GM12878 (cell line): ENCODE measurements at regions of chr7 and their contacts with region 1.

Region 1: DNA sequence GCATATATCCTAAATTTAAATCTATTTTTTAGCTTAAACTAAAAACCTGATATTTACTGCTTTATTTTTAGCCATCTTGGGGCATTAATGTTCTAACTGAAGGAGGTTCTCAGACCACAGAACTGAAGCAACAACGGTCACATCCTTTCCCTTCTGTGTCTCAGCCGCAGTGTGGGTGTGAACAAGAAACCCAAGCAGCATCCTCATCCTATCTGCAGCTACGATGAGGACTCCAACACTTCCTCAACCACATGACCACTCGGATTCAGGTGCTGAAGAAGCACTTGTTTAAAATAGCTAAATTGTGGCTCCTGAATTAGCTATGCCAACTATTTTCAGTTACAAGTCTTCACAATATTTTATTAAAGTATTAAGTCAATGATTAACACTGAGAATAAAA is 5.3 kb downstream of the ESYT2 start:
- DNase-seq: peak; percentile 61
- ATAC-seq: peak; percentile 74
- H3K4me3 ChIP-seq: no peak overlapping the region
- H3K27ac ChIP-seq: peak overlapping the region; percentile 46
- H3K4me1 ChIP-seq: peaks cover 21% of the 10 kb centered on the region
- H3K27me3 ChIP-seq: no peaks in the 10 kb centered on the region
- CTCF ChIP-seq: no peak
- EP300 ChIP-seq: peak; percentile 36 to 54; a peak in 1 of 4 replicates
- POLR2A ChIP-seq: peak; percentile 57; the same call in 1 of the 2 replicates
- RAD21 ChIP-seq: no peak

Region 2: GRCh38 chr7:158704704-158705468 is 119.1 kb before region 1 on chr7 and contains the start of gene NCAPG2:
- CTCF ChIA-PET with region 1: no interaction called
- POLR2A ChIA-PET with region 1: interaction called, 3 read pairs
- RAD21 ChIA-PET with region 1: no interaction called
- SMC1A ChIA-PET with region 1: interaction called, 5 read pairs
- in situ Hi-C with region 1: loop called (anchors 5 kb)
- intact Hi-C with region 1: loop called (anchors 2 kb)
- DNase-seq: peak; percentile 88
- ATAC-seq: peak; percentile 98
- H3K4me3 ChIP-seq: peak within 1 kb of the TSS; percentile 97
- H3K27ac ChIP-seq: peak within 1 kb of the TSS; percentile 90
- H3K4me1 ChIP-seq: peaks cover 3% of the 10 kb centered on the region
- H3K27me3 ChIP-seq: no peaks in the 10 kb centered on the region
- CTCF ChIP-seq: peak in 1 of 3 experiments; percentile 18; a peak in 1 of 6 replicates
- EP300 ChIP-seq: no peak
- POLR2A ChIP-seq: peak; percentile 98
- RAD21 ChIP-seq: no peak
- polyA plus RNA-seq, gene NCAPG2: 11.2 to 27.9 TPM

Region 3: DNA sequence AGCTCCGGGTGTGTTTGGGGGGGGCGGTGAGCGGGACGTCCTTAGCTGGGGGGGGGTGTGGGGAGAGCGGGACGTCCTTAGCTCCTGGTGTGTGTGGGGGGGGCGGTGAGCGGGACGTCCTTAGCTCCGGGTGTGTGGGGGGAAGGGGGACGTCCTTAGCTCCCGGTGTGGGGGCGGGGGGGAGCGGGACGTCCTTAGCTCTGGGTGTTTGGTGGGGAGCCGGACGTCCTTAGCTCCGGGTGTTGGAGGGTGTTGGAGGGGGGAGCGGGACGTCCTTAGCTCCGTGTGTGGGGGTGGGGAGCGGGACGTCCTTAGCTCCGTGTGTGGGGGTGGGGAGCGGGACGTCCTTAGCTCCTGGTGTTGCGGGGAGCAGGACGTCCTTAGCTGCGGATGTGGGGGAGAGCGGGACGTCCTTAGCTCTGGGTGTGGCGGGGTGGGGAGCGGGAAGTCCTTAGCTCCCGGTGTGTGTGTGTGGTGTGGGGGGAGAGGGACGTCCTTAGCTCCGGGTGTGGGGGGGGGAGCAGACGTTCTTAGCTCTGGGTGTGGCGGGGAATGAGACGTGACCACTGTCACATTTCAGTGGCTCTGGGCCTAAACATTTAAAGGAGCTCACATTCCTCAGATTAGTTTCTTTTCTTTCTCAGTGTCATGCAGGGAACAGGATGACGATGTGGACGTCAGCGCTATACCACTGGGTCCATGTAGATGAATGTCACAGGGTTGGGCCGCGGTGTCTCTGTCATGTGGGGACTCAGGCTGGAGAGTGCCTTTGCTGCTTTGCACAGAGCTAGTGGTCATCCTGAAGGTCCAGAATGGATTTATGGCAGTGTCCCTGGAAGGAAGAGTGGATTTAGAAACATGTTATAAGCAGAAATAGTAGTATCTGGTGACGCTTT is 39.8 kb after region 1 on chr7:
- CTCF ChIA-PET with region 1: interaction called, 6 read pairs
- POLR2A ChIA-PET with region 1: interaction called, 17 read pairs
- RAD21 ChIA-PET with region 1: interaction called, 15 read pairs
- SMC1A ChIA-PET with region 1: interaction called, 7 read pairs
- in situ Hi-C with region 1: no loop called
- intact Hi-C with region 1: no loop called
- DNase-seq: peak; percentile 33
- ATAC-seq: peak; percentile 71
- H3K4me3 ChIP-seq: peak overlapping the region; percentile 60
- H3K27ac ChIP-seq: peak overlapping the region; percentile 52
- H3K4me1 ChIP-seq: peaks cover 8% of the 10 kb centered on the region
- H3K27me3 ChIP-seq: no peaks in the 10 kb centered on the region
- CTCF ChIP-seq: no peak
- EP300 ChIP-seq: no peak
- POLR2A ChIP-seq: peak; percentile 60; the same call in 1 of the 2 replicates
- RAD21 ChIP-seq: no peak

Region 4: DNA sequence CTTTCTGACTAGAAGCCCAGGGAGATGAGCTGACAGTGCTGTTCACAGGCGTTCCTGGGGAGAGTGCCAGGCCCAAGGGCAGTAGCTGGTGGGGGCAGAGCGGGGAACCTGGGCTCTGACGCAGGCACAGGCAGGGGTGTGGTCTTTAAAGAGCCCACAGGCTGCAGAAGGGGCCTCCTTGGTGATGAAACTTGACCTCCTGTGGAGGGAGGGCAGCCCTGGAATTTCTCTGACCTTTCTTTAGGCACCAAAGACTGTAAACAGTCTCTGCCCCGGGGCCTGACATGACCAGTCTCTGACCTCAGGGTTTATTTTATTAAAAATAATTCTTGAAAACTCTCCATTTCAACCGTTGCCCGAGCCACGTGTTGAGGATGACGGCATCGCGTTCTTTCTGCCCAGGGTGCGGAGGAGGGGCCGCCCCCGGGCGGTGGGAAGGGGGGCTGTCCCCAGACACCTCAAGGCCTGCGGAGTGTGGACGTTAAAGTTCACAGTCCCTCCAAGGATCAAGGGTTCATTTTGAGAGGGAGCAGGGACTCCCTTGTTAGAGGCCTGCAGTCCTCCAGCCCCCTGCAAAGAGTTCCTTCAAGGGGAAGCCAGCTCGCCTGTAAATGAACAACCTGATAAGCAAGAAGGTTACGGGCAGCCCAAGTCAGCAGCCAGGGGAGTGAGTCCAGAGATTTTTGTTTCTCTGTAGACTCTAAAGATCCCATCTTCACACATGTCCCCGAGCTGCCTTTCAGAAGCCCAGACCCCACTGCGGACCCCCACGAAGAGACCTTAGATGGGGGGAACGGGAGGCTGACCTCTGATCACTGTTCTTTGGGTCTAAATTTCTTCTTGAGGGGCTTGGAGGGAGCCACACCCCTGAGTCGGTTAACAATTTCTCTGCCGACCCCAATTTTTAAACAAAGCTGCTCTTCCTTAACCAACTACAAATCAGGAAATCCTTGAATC is 191.7 kb after region 1 on chr7:
- CTCF ChIA-PET with region 1: no interaction called
- POLR2A ChIA-PET with region 1: no interaction called
- RAD21 ChIA-PET with region 1: no interaction called
- SMC1A ChIA-PET with region 1: no interaction called
- in situ Hi-C with region 1: no loop called
- intact Hi-C with region 1: no loop called
- DNase-seq: no peak
- ATAC-seq: no peak
- H3K4me3 ChIP-seq: no peak overlapping the region
- H3K27ac ChIP-seq: no peak overlapping the region
- H3K4me1 ChIP-seq: no peaks in the 10 kb centered on the region
- H3K27me3 ChIP-seq: no peaks in the 10 kb centered on the region
- CTCF ChIP-seq: no peak
- EP300 ChIP-seq: no peak
- POLR2A ChIP-seq: no peak
- RAD21 ChIP-seq: no peak